GM12878 (cell line): ENCODE measurements at regions of chr5 and their contacts with region 1.

Region 1: GRCh38 chr5:107104040-107104995 is 566.4 kb downstream of the EFNA5 start:
- DNase-seq: peak; percentile 28
- ATAC-seq: peak; percentile 96
- H3K4me3 ChIP-seq: no peak overlapping the region
- H3K27ac ChIP-seq: no peak overlapping the region
- H3K4me1 ChIP-seq: no peaks in the 10 kb centered on the region
- H3K27me3 ChIP-seq: no peaks in the 10 kb centered on the region
- CTCF ChIP-seq: peak; percentile 18 to 81 (median 52); a peak in 4 of 6 replicates
- EP300 ChIP-seq: no peak
- POLR2A ChIP-seq: no peak
- RAD21 ChIP-seq: peak; percentile 61

Region 2: DNA sequence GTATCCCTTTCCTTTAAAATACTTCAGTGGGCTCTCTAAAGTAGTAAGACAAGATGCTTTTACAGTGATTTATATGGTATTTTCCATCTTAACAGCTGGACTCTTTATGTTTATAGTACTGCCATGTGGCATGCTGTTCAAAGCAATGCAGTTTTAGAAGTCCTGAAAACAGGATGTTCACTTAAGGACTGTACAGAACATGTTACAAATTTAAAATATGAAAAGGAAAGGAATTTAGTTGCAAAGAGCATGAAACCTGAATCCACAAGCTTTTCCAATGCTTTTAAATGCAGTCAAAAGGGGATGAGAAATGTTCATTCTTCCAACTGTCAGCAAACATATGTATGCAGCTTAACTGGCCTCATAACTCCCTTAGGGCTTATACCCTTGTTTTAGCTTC is 13.8 kb before region 1 on chr5:
- CTCF ChIA-PET with region 1: interaction called, 8 read pairs
- POLR2A ChIA-PET with region 1: no interaction called
- RAD21 ChIA-PET with region 1: no interaction called
- SMC1A ChIA-PET with region 1: interaction called, 13 read pairs
- in situ Hi-C with region 1: no loop called
- intact Hi-C with region 1: no loop called
- DNase-seq: no peak
- ATAC-seq: no peak
- H3K4me3 ChIP-seq: no peak overlapping the region
- H3K27ac ChIP-seq: no peak overlapping the region
- H3K4me1 ChIP-seq: no peaks in the 10 kb centered on the region
- H3K27me3 ChIP-seq: no peaks in the 10 kb centered on the region
- CTCF ChIP-seq: no peak
- EP300 ChIP-seq: no peak
- POLR2A ChIP-seq: no peak
- RAD21 ChIP-seq: no peak

Region 3: GRCh38 chr5:107294211-107294550 is 189.9 kb after region 1 on chr5:
- CTCF ChIA-PET with region 1: no interaction called
- POLR2A ChIA-PET with region 1: no interaction called
- RAD21 ChIA-PET with region 1: interaction called, 3 read pairs
- SMC1A ChIA-PET with region 1: interaction called, 5 read pairs
- in situ Hi-C with region 1: no loop called
- intact Hi-C with region 1: loop called (anchors 2 kb)
- DNase-seq: peak; percentile 66
- ATAC-seq: peak; percentile 69
- H3K4me3 ChIP-seq: no peak overlapping the region
- H3K27ac ChIP-seq: no peak overlapping the region
- H3K4me1 ChIP-seq: peaks cover 20% of the 10 kb centered on the region
- H3K27me3 ChIP-seq: no peaks in the 10 kb centered on the region
- CTCF ChIP-seq: no peak
- EP300 ChIP-seq: peak; percentile 66 to 96; a peak in 3 of 4 replicates
- POLR2A ChIP-seq: no peak
- RAD21 ChIP-seq: no peak

Region 4: GRCh38 chr5:107359033-107359915 is 255.0 kb after region 1 on chr5:
- CTCF ChIA-PET with region 1: interaction called, 50 read pairs
- POLR2A ChIA-PET with region 1: no interaction called
- RAD21 ChIA-PET with region 1: interaction called, 25 read pairs
- SMC1A ChIA-PET with region 1: interaction called, 34 read pairs
- in situ Hi-C with region 1: no loop called
- intact Hi-C with region 1: loop called (anchors 5 kb)
- DNase-seq: no peak
- ATAC-seq: no peak; the same call in 2 of the 3 replicates
- H3K4me3 ChIP-seq: no peak overlapping the region
- H3K27ac ChIP-seq: no peak overlapping the region
- H3K4me1 ChIP-seq: peaks cover 6% of the 10 kb centered on the region; the same call in 1 of the 2 replicates
- H3K27me3 ChIP-seq: no peaks in the 10 kb centered on the region; a peak in 1 of 4 replicates
- CTCF ChIP-seq: no peak
- EP300 ChIP-seq: no peak
- POLR2A ChIP-seq: no peak
- RAD21 ChIP-seq: no peak